ENCODE measurements at regions of chr19 and their contacts with region 1.

Region 1: DNA sequence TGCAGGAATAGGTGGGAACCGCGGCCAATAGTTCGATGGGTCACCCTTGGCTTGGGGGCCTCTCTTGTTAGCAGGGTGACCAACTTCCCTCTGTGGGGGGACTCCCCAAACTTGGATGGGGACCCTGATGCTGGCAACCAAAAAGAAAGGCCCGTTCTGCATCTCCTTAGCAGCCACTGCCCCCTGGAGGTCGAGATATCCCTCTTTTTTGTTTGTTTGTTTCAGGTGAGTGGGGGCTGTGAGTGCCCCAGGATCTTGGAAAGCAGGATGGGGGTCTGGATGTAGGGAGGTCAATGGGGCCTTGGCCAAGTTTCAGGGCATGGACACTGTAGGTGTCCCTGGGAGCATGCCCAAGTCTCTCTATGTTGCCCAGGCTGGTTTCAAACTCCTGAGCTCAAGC is 7.7 kb upstream of the CRTC1 start:
- DNase-seq: peak in 1 of 2 experiments; percentile 33
- H3K4me3 ChIP-seq: no peak overlapping the region
- H3K27ac ChIP-seq: no peak overlapping the region
- H3K4me1 ChIP-seq: peaks cover 24% of the 10 kb centered on the region
- H3K27me3 ChIP-seq: no peaks in the 10 kb centered on the region
- CTCF ChIP-seq: peak; percentile 64

Region 2: DNA sequence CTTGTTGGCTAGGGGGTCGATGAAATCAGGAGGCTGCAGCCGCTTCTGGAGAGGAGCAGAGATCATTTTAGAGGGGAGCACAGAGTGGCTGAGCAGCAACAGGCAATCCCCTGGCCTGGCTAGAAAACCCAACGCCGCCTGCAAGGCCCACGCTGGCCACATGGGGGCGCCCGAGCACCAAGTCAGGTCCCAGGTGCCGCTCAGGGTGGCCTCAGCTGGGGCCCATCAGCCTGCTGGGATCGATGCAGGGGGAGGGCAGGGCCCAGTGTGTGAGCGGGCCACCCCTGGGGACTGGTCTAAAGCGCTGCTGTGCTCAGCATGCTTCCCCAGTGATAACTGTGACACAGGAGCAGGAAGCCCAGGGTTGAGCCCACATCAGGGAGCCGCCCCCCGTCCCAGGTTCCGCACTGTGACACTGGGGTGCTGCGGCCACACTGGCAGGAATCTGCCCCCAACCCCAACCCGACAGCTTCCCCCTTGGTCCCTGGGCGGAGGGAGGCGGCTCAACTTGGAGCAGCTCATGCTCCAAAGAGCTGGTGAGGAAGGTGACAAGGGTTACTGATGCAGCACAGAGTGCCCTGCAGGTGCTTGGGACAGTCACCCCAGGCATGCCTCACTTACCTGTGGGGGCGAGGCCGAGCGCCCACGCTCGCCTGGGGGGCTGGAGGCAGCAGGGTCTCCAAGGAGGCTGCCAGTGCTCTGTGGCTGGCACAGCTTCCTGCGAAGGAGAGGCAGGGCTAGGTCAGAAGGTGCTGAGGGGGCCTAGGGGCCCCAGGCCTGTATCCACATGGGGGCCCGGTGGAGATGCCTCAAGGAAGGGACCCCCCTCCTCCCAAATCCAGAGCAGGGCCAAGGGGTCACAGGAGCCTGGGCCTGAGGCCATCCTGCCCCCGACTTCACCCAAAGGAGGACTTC is 224.6 kb before region 1 on chr19:
- CTCF ChIA-PET with region 1: no interaction called
- POLR2A ChIA-PET with region 1: interaction called, 12 read pairs
- intact Hi-C with region 1: no loop called
- DNase-seq: peak; percentile 54 to 83
- H3K4me3 ChIP-seq: no peak overlapping the region
- H3K27ac ChIP-seq: no peak overlapping the region
- H3K4me1 ChIP-seq: peaks cover 17% of the 10 kb centered on the region
- H3K27me3 ChIP-seq: no peaks in the 10 kb centered on the region
- CTCF ChIP-seq: peak; percentile 99

Region 3: DNA sequence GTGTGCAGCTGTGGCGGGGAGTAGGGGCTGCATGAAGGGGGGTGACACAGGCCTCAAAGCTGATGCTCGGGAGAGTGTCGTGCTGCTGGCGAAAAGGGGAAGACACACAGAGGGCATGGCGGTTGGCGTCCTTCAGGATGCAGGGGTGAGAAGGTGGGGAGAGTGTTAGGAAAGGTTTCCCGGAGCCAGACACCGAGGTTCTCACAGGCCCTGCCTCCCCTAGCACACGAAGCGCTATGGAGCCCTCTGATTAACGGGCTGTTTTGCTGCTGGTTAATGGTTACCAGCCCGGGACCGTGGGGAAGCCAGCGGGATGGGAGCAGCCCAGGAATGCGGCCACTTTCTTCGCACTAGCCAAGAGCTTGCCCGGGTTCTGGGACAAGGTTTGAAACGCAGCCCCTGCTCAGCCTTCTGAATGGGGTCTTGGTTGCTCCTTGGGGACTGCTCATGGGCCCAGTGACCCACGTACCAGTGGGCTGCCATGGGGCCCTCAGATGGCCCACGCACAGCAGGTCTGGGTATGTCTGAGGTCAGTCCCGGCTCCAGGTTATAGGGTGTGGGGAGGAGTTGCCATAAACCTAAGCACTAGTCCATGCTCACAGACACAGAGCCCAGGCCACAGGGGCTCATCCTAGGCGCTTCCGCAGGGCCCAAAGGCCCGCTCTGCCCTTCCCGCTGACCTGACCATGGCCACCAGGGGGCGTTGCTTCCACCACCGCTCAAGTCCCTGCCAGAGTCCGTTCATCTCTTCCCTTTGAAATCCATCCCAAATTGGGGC is 206.5 kb before region 1 on chr19:
- CTCF ChIA-PET with region 1: interaction called, 5 read pairs
- POLR2A ChIA-PET with region 1: no interaction called
- intact Hi-C with region 1: loop called (anchors 10 kb)
- DNase-seq: no peak
- H3K4me3 ChIP-seq: no peak overlapping the region
- H3K27ac ChIP-seq: no peak overlapping the region
- H3K4me1 ChIP-seq: 0 out of 2 replicates have a peak, but pooled peaks cover 5% of the 10 kb centered on the region
- H3K27me3 ChIP-seq: no peaks in the 10 kb centered on the region
- CTCF ChIP-seq: peak; percentile 75

Region 4: DNA sequence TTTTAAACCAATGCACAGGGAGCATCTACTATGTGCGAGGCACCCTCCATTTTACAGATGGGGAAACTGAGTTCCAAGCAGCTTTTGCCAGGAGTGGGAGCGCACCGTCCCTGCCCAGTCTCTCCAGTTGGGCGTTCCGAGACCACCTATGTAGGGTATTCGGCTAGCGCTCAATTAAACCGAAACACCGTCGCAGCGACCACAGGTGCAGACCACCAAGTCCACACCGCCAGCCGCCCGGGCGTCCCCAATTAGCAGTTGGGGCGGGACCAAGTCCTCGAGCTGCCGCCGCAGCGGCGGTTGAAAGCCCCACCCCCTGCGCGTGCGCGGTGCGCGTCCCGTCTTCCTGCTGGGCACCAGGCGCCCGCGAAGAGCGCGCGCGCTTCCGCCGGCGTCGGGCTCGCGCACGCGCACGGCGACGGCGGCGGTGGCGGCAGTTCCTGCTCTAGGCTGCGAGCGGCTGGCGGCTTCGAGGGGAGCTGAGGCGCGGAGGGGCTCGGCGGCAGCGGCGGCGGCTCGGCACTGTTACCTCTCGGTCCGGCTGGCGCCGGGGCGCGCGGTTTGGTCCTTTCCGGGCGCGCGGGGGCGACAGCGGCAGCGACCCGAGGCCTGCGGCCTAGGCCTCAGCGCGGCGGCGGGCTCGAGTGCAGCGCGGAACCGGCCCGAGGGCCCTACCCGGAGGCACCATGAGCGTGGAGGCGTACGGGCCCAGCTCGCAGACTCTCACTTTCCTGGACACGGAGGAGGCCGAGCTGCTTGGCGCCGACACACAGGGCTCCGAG is 155.9 kb after region 1 on chr19 and contains the start of gene UPF1:
- CTCF ChIA-PET with region 1: interaction called, 3 read pairs
- POLR2A ChIA-PET with region 1: no interaction called
- intact Hi-C with region 1: loop called (anchors 5 kb)
- DNase-seq: peak; percentile 80 to 91
- H3K4me3 ChIP-seq: peak within 1 kb of the TSS; percentile 95
- H3K27ac ChIP-seq: peak within 1 kb of the TSS; percentile 7; the same call in 1 of the 2 replicates
- H3K4me1 ChIP-seq: peaks cover 22% of the 10 kb centered on the region
- H3K27me3 ChIP-seq: no peaks in the 10 kb centered on the region
- CTCF ChIP-seq: no peak
- total RNA-seq, gene UPF1: 78.8 and 93.0 TPM in 2 replicates

Region 5: DNA sequence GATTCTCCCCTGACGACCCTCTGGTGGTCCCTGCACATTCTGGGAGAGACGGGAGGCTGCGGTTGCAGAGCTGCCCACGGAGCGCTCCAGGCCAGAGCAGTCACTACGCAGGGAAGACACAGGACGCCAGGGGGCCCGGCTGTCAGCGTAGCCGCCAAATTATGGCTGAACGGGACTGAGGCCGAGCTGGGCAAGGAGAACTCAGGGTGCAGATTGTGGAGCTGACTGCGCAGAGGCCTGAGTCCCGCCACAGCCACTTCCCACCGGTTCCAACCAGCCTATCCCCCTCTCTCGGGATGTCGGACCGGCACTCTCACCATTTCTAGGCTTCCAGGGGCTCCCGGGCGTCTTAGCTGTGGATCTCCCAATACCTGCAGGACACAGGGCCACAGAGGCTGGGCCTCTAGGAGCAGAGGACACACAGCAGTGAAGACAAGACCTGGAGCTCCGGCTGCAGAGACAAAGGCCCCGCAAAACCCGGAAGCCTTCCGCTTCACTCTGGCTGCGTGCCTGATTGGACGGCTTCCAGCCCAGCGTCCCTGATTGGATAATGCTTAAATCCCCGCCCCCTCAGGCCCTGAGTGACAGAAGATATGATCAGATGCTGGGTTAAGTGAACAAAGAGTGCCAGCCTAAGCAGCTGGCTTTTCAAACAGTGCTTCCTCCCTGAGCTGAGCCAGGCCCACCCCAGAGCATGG is 1889.7 kb after region 1 on chr19 and contains the start of gene ZNF737:
- CTCF ChIA-PET with region 1: no interaction called
- POLR2A ChIA-PET with region 1: no interaction called
- intact Hi-C with region 1: no loop called
- DNase-seq: peak; percentile 88 to 94
- H3K4me3 ChIP-seq: peak within 1 kb of the TSS; percentile 72
- H3K27ac ChIP-seq: peak within 1 kb of the TSS; percentile 31; the same call in 1 of the 2 replicates
- H3K4me1 ChIP-seq: no peaks in the 10 kb centered on the region; the same call in 1 of the 2 replicates
- H3K27me3 ChIP-seq: no peaks in the 10 kb centered on the region
- CTCF ChIP-seq: no peak
- total RNA-seq, gene ZNF737: 5.4 and 6.0 TPM in 2 replicates